ENCODE measurements at regions of chr11 and their contacts with region 1.

Region 1: GRCh38 chr11:27183672-27184457 is 143.2 kb downstream of the BBOX1 start:
- DNase-seq: no peak
- ATAC-seq: peak; percentile 63

Region 2: GRCh38 chr11:27296497-27296896 is 112.6 kb after region 1 on chr11:
- intact Hi-C with region 1: loop called (anchors 5 kb)
- DNase-seq: no peak
- ATAC-seq: peak; percentile 74

Region 3: DNA sequence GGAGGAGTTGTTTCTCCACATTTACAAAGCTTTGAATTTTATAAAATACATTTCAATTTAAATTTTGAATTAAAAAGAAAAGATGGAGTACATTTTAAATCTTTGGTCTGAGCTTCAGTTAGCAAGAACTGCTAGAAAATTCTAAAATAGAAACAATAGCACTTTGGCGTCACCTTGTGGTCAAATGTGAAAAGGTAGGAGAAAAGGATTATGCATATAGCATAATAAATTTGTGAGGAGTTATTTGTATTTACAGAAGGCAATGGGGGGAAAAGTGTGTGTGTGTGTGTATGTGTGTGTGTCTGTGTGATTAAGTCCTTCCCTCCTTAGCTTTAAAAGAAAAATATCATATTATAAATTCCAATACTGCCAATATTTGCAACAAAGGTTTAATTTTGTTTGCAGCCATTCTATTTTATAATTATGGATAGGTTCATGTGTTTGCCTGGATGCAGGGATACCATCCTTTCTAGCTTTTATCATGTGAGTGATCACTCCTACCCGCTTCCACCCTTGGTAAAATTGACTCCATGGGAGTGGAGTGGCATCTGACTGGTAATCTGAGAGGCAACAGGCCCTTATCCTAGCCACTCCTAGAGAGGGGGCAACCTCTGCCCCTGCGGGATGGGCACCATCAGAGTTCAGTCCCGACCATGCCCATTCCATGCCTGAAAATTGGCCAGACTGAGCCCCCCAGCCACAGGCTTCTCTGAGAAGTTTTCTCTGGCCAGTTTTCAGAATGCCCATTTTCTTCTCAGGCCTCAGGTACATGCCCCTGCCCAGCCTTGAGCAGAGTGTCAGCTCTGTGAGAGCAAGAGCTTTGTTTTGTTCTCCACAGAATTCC is 302.3 kb after region 1 on chr11:
- intact Hi-C with region 1: loop called (anchors 2 kb)
- DNase-seq: no peak
- ATAC-seq: peak; percentile 61

Measured in left ventricle myocardium superior (tissue), 1 donor.